ENCODE measurements at regions of chr10 and their contacts with region 1.

Region 1: DNA sequence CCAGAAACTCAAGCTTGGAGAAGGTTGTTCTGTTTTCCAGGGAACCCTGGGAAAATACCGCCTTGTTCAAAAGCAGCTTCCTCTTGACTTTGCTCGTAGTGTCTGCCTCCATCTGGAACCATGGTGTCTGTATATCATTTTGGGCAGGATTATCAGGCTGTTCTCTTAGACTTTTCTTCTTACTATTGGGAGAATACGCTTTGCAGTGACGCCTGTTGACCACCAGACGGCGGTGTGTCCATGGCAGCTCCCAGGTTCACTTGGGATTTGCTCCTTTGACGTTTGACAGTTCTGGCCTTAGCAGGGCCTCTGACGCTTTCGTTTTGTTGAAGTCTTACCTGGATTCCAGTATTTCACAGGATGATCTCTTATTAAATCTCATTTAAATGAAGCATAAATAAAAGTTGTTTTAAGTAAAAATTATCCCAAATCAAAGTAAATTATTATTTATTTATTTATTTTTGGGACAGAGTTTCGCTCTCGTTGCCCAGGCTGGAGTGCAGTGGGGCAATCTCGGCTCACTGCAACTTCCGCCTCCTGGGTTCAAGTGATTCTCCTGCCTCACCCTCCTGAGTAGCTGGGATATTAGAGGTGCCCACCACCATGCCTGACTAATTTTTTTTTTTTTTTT is 41.8 kb upstream of the GJD4 start:
- DNase-seq: peak in 6 of 9 donors; percentile 25 to 40 (median 34)
- ATAC-seq: peak; percentile 67
- H3K4me3 ChIP-seq: no peak overlapping the region
- H3K4me3 Mint-ChIP-seq: no peak overlapping the region
- H3K27ac ChIP-seq: no peak overlapping the region
- H3K27ac Mint-ChIP-seq: peak overlapping the region in 4 of 9 donors; percentile 4 to 72 (median 30)
- H3K4me1 ChIP-seq: no peaks in the 10 kb centered on the region
- H3K4me1 Mint-ChIP-seq: peaks cover 0 to 16% (median 5%) of the 10 kb centered on the region in 7 donors
- H3K27me3 ChIP-seq: no peaks in the 10 kb centered on the region
- H3K27me3 Mint-ChIP-seq: no peaks in the 10 kb centered on the region

Region 2: DNA sequence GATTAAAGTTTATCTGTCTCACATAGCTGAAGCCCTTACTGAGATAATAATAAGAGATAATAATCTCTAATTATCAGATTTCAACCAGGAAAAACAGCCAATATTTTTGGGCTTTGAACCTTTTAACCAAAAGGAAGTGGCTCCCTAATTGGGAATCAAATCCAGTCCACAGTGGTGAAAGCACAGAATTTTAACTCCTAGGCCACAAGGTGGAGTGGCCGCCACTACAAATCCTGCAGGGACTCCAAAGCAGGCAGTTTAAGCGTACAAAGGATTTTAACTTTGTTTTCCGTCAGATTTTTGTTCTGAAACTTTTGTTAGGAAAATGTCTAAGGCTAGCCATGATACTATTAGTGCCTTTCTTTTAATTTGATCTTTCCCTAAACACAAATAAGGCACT is 326.6 kb before region 1 on chr10:
- CTCF ChIA-PET with region 1: interaction called, 4 read pairs
- POLR2A ChIA-PET with region 1: no interaction called
- intact Hi-C with region 1: loop called (anchors 2 to 10 kb)
- DNase-seq: no peak
- ATAC-seq: no peak
- H3K4me3 ChIP-seq: no peak overlapping the region
- H3K4me3 Mint-ChIP-seq: no peak overlapping the region
- H3K27ac ChIP-seq: no peak overlapping the region
- H3K27ac Mint-ChIP-seq: no peak overlapping the region
- H3K4me1 ChIP-seq: no peaks in the 10 kb centered on the region
- H3K4me1 Mint-ChIP-seq: peaks cover 0 to 2% (median 0%) of the 10 kb centered on the region in 7 donors
- H3K27me3 ChIP-seq: no peaks in the 10 kb centered on the region
- H3K27me3 Mint-ChIP-seq: no peaks in the 10 kb centered on the region

Region 3: GRCh38 chr10:35246770-35247343 is 316.5 kb before region 1 on chr10:
- CTCF ChIA-PET with region 1: no interaction called
- POLR2A ChIA-PET with region 1: no interaction called
- intact Hi-C with region 1: loop called in 1 of 2 experiments (anchors 10 kb)
- DNase-seq: no peak
- ATAC-seq: no peak
- H3K4me3 ChIP-seq: no peak overlapping the region
- H3K4me3 Mint-ChIP-seq: no peak overlapping the region
- H3K27ac ChIP-seq: no peak overlapping the region
- H3K27ac Mint-ChIP-seq: no peak overlapping the region
- H3K4me1 ChIP-seq: no peaks in the 10 kb centered on the region
- H3K4me1 Mint-ChIP-seq: no peaks in the 10 kb centered on the region
- H3K27me3 ChIP-seq: no peaks in the 10 kb centered on the region
- H3K27me3 Mint-ChIP-seq: peaks cover 0 to 5% (median 0%) of the 10 kb centered on the region in 5 donors

Region 4: GRCh38 chr10:35379226-35380137 is 183.9 kb before region 1 on chr10:
- CTCF ChIA-PET with region 1: no interaction called
- POLR2A ChIA-PET with region 1: no interaction called
- intact Hi-C with region 1: loop called in 1 of 2 experiments (anchors 2 kb)
- DNase-seq: peak in 7 of 9 donors; percentile 16 to 56 (median 34)
- ATAC-seq: peak; percentile 73
- H3K4me3 ChIP-seq: no peak overlapping the region
- H3K4me3 Mint-ChIP-seq: peak overlapping the region; percentile 18 to 74 (median 58)
- H3K27ac ChIP-seq: peak overlapping the region; percentile 12
- H3K27ac Mint-ChIP-seq: peak overlapping the region; percentile 41 to 90 (median 75)
- H3K4me1 ChIP-seq: peaks cover 9 to 26% of the 10 kb centered on the region in 2 donors
- H3K4me1 Mint-ChIP-seq: peaks cover 40 to 92% (median 77%) of the 10 kb centered on the region in 7 donors
- H3K27me3 ChIP-seq: no peaks in the 10 kb centered on the region
- H3K27me3 Mint-ChIP-seq: no peaks in the 10 kb centered on the region

Region 5: GRCh38 chr10:35412900-35413491 is 150.4 kb before region 1 on chr10:
- CTCF ChIA-PET with region 1: no interaction called
- POLR2A ChIA-PET with region 1: no interaction called
- intact Hi-C with region 1: loop called in 1 of 2 experiments (anchors 5 kb)
- DNase-seq: no peak
- ATAC-seq: peak; percentile 23
- H3K4me3 ChIP-seq: no peak overlapping the region
- H3K4me3 Mint-ChIP-seq: no peak overlapping the region
- H3K27ac ChIP-seq: no peak overlapping the region
- H3K27ac Mint-ChIP-seq: no peak overlapping the region
- H3K4me1 ChIP-seq: peaks cover 0 to 33% of the 10 kb centered on the region in 2 donors
- H3K4me1 Mint-ChIP-seq: peaks cover 0 to 70% (median 20%) of the 10 kb centered on the region in 7 donors
- H3K27me3 ChIP-seq: no peaks in the 10 kb centered on the region
- H3K27me3 Mint-ChIP-seq: no peaks in the 10 kb centered on the region